Astrocyte of the cerebellum (primary cell): ENCODE measurements at regions of chr13 and their contacts with region 1.

Region 1: DNA sequence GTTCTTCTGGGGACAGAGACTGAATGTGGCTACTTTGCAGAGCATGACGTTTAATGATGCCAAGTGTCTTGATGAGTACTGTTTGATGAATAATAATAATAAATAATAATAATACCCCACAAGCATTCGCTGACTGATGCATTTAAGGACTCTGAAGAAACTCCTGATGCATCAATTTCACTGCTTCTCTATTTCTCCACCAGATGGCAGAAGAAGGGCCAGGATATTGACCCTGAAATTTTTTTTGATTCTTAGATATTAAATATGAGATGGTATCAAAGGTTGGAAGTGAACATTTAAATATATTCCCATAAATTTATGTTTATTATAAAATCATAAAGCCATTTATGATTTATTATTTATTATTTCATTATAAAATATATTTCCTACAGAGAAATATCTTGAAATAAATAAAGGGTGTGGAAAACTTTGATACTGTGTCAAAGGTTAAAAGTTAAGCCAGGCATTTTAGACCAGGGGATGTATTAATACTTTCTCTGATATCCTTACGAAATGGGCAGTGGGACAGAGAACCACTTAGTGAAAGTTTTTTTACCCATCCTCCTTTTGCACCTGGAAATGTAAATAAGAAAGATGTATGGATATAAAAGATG is 170.9 kb downstream of the LACC1 start:
- DNase-seq: no peak
- H3K4me3 ChIP-seq: no peak overlapping the region
- CTCF ChIP-seq: peak; percentile 76

Region 2: GRCh38 chr13:44132710-44133109 is 82.2 kb after region 1 on chr13:
- in situ Hi-C with region 1: loop called (anchors 5 kb)
- DNase-seq: no peak
- H3K4me3 ChIP-seq: no peak overlapping the region
- CTCF ChIP-seq: no peak

Region 3: GRCh38 chr13:44435142-44435982 is 384.8 kb after region 1 on chr13:
- in situ Hi-C with region 1: loop called (anchors 25 kb)
- DNase-seq: peak; percentile 98
- H3K4me3 ChIP-seq: peak overlapping the region; percentile 67
- CTCF ChIP-seq: no peak